ENCODE measurements at regions of chr19 and their contacts with region 1.

Region 1: DNA sequence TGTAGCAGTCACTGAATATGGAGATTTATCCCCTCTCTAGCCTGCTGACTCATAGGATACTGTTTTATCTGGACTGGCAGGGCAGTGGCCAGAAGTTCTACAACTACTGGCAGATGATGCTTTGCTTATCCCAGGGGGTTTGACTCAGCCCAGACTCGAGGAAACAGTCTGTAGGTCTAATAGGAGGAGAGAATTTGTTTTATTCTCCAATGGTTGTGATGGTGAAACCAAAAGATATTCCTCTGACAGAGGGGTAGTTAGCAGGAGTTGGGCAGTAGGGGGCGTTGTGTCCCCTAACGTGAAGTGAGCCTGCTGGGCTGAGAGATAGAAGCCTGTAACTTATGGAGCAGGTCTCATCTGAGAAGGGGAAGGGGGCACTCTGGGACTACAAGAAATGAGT is 74.9 kb downstream of the WTIP start:
- H3K4me3 ChIP-seq: no peak overlapping the region
- H3K27ac ChIP-seq: no peak overlapping the region
- H3K4me1 ChIP-seq: no peaks in the 10 kb centered on the region
- CTCF ChIP-seq: 0 out of 2 replicates have a peak, but pooled peaks have one; percentile 39

Region 2: GRCh38 chr19:34540811-34541557 is 15.5 kb before region 1 on chr19:
- CTCF ChIA-PET with region 1: interaction called, 30 read pairs
- POLR2A ChIA-PET with region 1: no interaction called
- H3K4me3 ChIP-seq: no peak overlapping the region
- H3K27ac ChIP-seq: no peak overlapping the region
- H3K4me1 ChIP-seq: no peaks in the 10 kb centered on the region
- CTCF ChIP-seq: no peak

Measured in HEK293 (cell line).